Adrenal gland (tissue), 19 donors: ENCODE measurements at regions of chr22 and their contacts with region 1.

Region 1: GRCh38 chr22:42151924-42152635 is 21.5 kb upstream of the CYP2D6 start:
- DNase-seq: no peak
- H3K4me3 ChIP-seq: no peak overlapping the region
- H3K27ac ChIP-seq: no peak overlapping the region
- H3K4me1 ChIP-seq: no peaks in the 10 kb centered on the region
- H3K27me3 ChIP-seq: no peaks in the 10 kb centered on the region
- CTCF ChIP-seq: no peak
- POLR2A ChIP-seq: no peak

Region 2: DNA sequence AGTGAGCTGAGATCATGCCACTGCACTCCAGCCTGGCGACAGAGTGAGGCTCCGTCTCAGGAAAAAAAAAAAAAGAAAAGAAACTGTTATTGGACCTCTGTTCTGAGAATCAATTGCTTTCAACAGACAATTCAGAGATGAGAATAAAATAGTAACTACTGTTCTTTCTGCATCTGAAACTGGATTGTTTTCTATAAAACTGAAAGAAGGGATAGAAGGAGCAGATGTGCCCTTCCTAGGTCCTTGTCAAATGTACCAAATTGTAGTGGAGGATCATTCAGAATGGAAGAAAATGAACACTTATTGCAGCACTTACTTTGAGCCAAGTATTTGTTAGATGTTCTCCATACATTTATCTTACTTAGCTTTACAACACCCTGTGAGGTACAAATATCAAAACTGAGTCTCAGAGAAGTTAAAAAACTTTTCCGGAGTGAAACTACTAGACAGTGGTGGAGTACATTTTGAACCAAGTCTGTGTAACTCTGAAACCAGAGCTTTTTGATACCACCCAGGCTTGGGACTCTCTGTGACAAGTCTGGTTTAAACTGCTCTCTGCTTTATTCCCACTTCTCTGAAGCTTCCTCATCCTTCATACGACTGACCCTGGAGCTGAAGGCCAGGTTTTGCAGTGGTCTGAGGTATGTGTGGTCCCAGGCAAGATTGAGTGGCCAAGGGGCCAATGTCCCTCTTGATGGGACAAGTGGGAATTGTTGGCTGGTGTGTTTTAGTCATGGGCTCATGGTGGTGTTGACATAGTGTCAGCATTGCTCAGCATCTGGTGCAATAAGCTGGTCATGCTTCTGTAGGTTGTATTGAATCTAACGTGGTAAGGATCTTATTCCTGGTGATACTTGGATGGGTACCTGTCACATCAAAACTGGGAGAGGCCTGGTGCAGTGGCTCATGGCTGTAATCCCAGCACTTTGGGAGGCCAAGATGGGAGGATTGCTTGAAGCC is 399.8 kb before region 1 on chr22:
- intact Hi-C with region 1: no loop called
- DNase-seq: no peak
- H3K4me3 ChIP-seq: no peak overlapping the region
- H3K27ac ChIP-seq: no peak overlapping the region
- H3K4me1 ChIP-seq: no peaks in the 10 kb centered on the region
- H3K27me3 ChIP-seq: no peaks in the 10 kb centered on the region
- CTCF ChIP-seq: no peak
- POLR2A ChIP-seq: no peak

Region 3: GRCh38 chr22:41910050-41911000 is 241.8 kb before region 1 on chr22:
- intact Hi-C with region 1: no loop called
- DNase-seq: peak in 6 of 7 donors; percentile 68 to 76 (median 72)
- H3K4me3 ChIP-seq: peak overlapping the region in 1 of 4 donors; percentile 49
- H3K27ac ChIP-seq: peak overlapping the region in 4 of 5 donors; percentile 18 to 73 (median 62)
- H3K4me1 ChIP-seq: peaks cover 24 to 40% of the 10 kb centered on the region in 2 donors
- H3K27me3 ChIP-seq: peaks cover 9% of the 10 kb centered on the region
- CTCF ChIP-seq: no peak
- POLR2A ChIP-seq: no peak

Region 4: DNA sequence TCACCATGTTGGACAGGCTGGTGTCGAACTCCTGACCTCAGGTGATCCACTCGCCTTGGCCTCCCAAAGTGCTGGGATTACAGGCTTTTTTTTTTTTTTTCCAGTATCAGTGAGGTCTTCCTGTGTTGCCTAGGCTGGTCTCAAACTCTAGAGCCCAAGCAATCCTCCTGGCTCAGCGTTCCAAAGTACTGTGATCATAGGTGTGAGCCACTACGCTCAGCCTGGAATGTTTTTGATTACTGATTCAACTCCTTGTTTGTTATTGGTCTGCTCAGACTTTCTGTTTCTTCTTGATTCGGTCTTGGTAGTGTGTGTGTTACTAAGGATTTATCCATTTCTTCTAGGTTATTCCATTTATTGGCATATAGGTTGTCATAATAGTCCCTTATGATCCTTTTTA is 112.8 kb before region 1 on chr22:
- intact Hi-C with region 1: loop called in 1 of 2 experiments (anchors 10 kb)
- DNase-seq: no peak
- H3K4me3 ChIP-seq: no peak overlapping the region
- H3K27ac ChIP-seq: no peak overlapping the region
- H3K4me1 ChIP-seq: no peaks in the 10 kb centered on the region
- H3K27me3 ChIP-seq: no peaks in the 10 kb centered on the region
- CTCF ChIP-seq: no peak
- POLR2A ChIP-seq: no peak